ENCODE measurements at regions of chr15 and their contacts with region 1.

Region 1: DNA sequence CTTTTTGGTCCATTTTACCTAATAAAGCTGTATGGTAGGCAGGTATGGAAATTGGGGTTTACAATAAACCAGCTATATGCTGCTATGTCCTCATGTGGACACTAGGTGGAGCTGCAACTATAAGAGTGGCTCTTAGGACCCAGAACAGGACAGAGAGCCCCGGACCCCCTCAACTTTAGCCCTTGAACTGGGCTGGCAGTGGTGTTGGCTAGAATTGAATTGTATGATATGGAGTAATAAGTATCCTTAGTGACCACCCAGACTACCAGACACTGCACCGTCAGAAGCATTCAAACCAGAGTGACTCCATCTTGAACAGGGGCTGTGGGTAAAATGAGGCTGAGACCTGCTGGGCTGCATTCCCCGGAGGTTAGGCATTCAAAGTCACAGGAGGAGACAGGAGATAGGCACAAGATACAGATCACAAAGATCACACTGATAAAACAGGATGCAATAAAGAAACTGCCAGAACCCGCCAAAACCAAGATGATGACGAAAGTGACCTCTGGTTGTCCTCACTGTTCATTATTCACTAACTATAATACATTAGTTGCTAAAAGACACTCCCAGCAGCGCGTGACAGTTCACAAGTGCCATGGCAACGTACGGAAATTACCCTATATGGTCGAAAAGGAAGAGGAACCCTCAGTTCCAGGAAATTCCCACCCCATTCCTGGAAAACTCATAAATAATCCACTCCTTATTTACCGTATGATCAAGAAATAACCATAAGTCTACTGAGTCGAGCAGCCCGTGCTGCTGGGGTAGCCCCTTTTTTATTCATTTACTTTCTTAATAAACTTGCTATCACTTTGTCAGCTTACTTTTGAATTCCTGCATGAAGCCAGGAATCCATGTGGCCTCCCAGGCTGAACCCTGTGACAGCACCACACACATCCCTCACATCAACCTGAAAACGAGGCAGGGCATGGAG is 68.7 kb upstream of the BLM start:
- DNase-seq: peak; percentile 51
- ATAC-seq: peak; percentile 58
- H3K4me3 ChIP-seq: no peak overlapping the region
- H3K27ac ChIP-seq: no peak overlapping the region
- H3K4me1 ChIP-seq: peaks cover 21% of the 10 kb centered on the region
- H3K27me3 ChIP-seq: peaks cover 0 to 2% of the 10 kb centered on the region in 2 experiments; a peak in 2 of 5 replicates
- CTCF ChIP-seq: peak; percentile 82
- EP300 ChIP-seq: no peak
- POLR2A ChIP-seq: no peak
- RAD21 ChIP-seq: peak; percentile 76

Region 2: DNA sequence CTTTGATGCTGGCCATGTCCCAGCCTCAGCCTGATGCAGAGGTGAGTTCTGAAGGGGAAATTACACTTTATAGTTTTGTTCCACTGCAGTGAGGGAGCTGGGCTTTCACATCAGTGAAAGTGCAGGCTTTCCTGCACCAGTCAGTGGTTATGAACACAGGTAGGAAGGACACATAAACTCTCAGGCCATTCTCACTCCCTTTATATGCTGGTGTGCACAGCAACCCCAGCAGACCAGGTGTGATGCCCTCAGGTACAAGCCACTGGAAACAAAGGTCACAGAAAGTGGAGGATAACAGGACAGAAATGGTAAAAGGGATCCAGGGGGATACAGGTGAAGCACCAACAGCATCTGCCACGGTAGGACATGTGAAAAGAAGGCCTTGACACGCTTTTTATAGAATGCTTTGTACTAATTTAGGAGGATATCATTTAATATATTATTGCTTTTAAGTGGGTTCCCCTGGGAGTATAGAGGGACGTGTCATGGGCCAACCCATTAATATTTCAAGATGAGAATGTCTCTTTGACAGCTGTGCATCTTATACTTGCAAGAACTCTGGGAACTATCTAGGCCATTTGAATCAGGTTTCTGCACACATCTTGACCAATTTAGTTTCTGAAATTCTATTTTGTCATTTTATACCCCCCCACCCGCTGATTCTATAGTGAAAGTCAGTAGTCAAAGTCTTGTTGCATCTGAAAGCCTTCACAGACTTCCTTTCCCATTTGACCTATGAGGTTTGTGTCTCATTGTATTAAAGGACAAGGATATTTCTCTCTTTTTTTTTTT is 43.8 kb after region 1 on chr15:
- CTCF ChIA-PET with region 1: interaction called, 18 read pairs
- POLR2A ChIA-PET with region 1: no interaction called
- in situ Hi-C with region 1: loop called (anchors 5 kb)
- intact Hi-C with region 1: loop called (anchors 1 kb)
- DNase-seq: no peak
- ATAC-seq: no peak
- H3K4me3 ChIP-seq: no peak overlapping the region
- H3K27ac ChIP-seq: no peak overlapping the region
- H3K4me1 ChIP-seq: no peaks in the 10 kb centered on the region
- H3K27me3 ChIP-seq: no peaks in the 10 kb centered on the region
- CTCF ChIP-seq: no peak
- EP300 ChIP-seq: no peak
- POLR2A ChIP-seq: no peak
- RAD21 ChIP-seq: no peak

Region 3: GRCh38 chr15:90710436-90711027 is 62.1 kb after region 1 on chr15:
- CTCF ChIA-PET with region 1: no interaction called
- POLR2A ChIA-PET with region 1: no interaction called
- in situ Hi-C with region 1: no loop called
- intact Hi-C with region 1: no loop called
- DNase-seq: no peak
- ATAC-seq: no peak
- H3K4me3 ChIP-seq: no peak overlapping the region
- H3K27ac ChIP-seq: no peak overlapping the region
- H3K4me1 ChIP-seq: no peaks in the 10 kb centered on the region
- H3K27me3 ChIP-seq: no peaks in the 10 kb centered on the region
- CTCF ChIP-seq: no peak
- EP300 ChIP-seq: no peak
- POLR2A ChIP-seq: no peak
- RAD21 ChIP-seq: no peak

Region 4: DNA sequence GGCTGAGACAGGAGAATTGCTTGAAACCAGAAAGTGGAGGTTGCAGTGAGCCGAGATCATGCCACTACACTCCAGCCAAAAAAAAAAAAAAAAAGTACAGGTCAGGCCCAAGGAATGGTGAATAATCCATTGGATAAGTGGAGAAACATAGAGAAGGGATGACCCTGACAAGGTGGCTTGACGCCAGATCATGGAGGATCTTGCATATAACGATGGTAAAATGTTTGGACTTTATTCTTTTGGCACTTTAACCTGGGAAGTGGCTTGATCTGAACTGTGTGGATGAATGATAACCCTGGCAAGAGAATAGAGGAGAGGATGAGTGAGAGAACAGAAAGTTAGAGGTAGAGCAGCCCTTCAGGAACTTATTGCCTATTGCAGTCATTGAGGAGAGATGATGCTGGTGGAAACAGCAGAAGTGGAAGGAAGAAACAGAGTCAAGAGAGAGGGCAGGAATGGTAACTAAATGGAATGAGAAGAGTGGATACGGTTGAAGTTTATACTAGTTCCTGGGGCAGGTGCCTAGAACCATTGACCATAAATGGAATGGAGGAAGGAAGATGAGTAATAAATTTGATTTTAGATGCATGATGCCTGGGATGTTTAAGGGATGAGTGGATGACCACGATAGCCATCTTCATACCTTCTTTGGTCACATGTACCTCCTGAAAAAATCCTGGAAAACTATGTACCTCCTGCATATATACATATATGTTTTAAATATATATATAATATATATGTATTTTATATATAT is 126.5 kb after region 1 on chr15:
- CTCF ChIA-PET with region 1: no interaction called
- POLR2A ChIA-PET with region 1: no interaction called
- in situ Hi-C with region 1: no loop called
- intact Hi-C with region 1: no loop called
- DNase-seq: no peak
- ATAC-seq: no peak
- H3K4me3 ChIP-seq: no peak overlapping the region
- H3K27ac ChIP-seq: no peak overlapping the region
- H3K4me1 ChIP-seq: no peaks in the 10 kb centered on the region
- H3K27me3 ChIP-seq: no peaks in the 10 kb centered on the region
- CTCF ChIP-seq: no peak
- EP300 ChIP-seq: no peak
- POLR2A ChIP-seq: no peak
- RAD21 ChIP-seq: no peak

Region 5: DNA sequence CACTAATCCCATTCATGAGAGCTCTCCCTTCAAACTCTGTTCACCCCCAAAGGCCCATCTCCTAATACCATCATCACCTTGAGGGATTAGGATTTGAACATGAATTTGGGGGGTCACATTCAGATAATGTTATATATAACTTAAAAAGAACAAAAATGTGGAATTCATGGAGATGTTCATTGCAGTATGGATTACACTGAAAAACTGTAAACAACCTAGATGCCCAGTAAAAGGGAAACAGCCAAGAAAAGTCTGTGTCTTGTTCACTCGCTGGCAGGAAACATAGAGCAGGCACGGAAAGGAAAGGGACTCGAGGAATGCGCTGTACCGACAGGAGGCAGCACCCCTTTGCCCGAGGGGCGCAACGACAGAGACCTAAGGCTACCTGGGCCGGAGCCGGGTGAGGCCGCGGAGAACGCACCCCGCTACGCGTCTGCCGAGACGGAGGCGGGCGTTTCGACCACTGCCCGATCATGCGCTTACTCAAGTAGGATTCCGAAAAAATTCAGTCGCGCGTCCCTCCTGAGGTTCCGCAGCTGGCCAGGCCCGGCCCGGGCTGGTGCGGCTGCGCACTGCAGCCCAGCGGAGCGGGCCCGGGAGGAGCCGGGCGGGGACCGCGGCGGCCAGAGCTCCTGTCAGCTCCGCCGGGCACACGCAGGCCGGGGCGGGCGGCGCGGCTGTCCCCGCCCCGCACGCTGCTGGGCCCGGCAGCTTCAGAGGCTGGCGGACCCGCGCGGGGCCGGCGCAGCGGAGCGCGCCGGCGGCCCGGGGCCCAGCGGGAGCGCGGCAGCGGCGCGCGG is 253.8 kb after region 1 on chr15:
- CTCF ChIA-PET with region 1: no interaction called
- POLR2A ChIA-PET with region 1: no interaction called
- in situ Hi-C with region 1: no loop called
- intact Hi-C with region 1: no loop called
- DNase-seq: peak; percentile 64
- ATAC-seq: peak; percentile 85
- H3K4me3 ChIP-seq: peak overlapping the region; percentile 71 to 89 (median 81)
- H3K27ac ChIP-seq: peak overlapping the region; percentile 64
- H3K4me1 ChIP-seq: peaks cover 20% of the 10 kb centered on the region
- H3K27me3 ChIP-seq: peaks cover 0 to 1% of the 10 kb centered on the region in 2 experiments; a peak in 1 of 5 replicates
- CTCF ChIP-seq: peak; percentile 90
- EP300 ChIP-seq: no peak
- POLR2A ChIP-seq: peak; percentile 37 to 39; a peak in 2 of 4 replicates
- RAD21 ChIP-seq: peak; percentile 52; the same call in 1 of the 2 replicates

Measured in HepG2 (cell line).